ENCODE measurements at regions of chr20 and their contacts with region 1.

Region 1: GRCh38 chr20:39112178-39112743 is 150.1 kb downstream of the DHX35 start:
- DNase-seq: peak; percentile 24 to 40
- ATAC-seq: peak; percentile 64 to 90 (median 88)
- H3K4me3 ChIP-seq: no peak overlapping the region
- H3K27ac ChIP-seq: no peak overlapping the region
- H3K4me1 ChIP-seq: peaks cover 0 to 9% (median 0%) of the 10 kb centered on the region in 9 donors
- H3K27me3 ChIP-seq: peaks cover 0 to 53% (median 28%) of the 10 kb centered on the region in 7 donors
- CTCF ChIP-seq: peak; percentile 31 to 74 (median 64)

Region 2: DNA sequence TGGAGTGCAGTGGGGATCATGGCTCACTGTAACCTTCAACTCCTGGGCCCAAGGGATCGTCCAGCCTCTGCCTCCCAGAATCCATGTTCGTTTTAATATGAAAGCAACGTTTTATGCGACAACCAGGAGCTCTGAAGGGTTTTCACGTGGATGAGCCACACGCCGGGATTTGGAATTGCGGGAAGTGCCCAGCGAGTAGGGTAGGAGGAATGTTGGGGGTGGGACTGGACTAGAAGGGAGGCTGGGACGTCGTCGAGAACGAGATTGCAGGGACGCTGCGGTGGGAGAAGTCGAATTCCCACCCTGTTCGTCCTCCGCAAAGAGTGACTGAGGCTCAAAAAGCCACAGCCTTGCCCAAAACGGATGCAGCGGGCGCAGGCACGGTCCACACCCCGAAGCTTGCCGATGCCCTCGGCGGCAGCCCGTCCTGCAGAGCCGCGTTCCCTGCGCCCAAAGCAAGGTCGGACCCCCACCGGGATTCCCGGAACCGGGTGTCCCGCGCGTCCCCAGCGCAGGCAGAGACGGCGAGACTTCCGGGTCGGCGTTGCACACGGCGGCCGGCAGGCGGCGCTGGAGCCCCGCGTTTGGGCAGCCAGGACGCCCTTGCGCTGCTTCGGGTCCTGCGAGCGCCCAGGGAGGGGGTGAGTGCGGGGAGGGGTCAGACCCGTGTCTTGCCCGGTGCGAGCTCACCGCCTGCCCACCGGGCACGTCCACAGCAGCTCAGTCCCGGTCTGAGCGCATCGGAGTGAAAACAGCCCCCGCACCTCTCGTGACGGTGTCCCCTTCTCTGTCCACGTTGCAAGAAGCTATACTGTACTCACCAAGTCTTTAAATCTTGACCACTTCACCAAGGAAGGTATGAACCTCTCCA is 62.3 kb before region 1 on chr20:
- intact Hi-C with region 1: no loop called
- DNase-seq: peak; percentile 72 to 85
- ATAC-seq: peak; percentile 84 to 92 (median 88)
- H3K4me3 ChIP-seq: peak overlapping the region; percentile 19 to 80 (median 68)
- H3K27ac ChIP-seq: peak overlapping the region in 8 of 10 donors; percentile 12 to 71 (median 28)
- H3K4me1 ChIP-seq: peaks cover 0 to 16% (median 7%) of the 10 kb centered on the region in 9 donors
- H3K27me3 ChIP-seq: peaks cover 0 to 14% (median 0%) of the 10 kb centered on the region in 7 donors
- CTCF ChIP-seq: peak; percentile 95 to 100 (median 99)

Region 3: GRCh38 chr20:39264506-39265172 is 152.4 kb after region 1 on chr20:
- intact Hi-C with region 1: loop called in 2 of 10 experiments (anchors 5 to 10 kb)
- DNase-seq: peak; percentile 41 to 50
- ATAC-seq: peak; percentile 28 to 79 (median 54)
- H3K4me3 ChIP-seq: no peak overlapping the region
- H3K27ac ChIP-seq: no peak overlapping the region
- H3K4me1 ChIP-seq: peaks cover 0 to 24% (median 0%) of the 10 kb centered on the region in 9 donors
- H3K27me3 ChIP-seq: peaks cover 0 to 8% (median 0%) of the 10 kb centered on the region in 7 donors
- CTCF ChIP-seq: peak; percentile 58 to 92 (median 86)

Region 4: GRCh38 chr20:39429716-39430115 is 317.5 kb after region 1 on chr20:
- intact Hi-C with region 1: loop called in 1 of 10 experiments (anchors 5 kb)
- DNase-seq: peak in 1 of 2 donors; percentile 9
- ATAC-seq: peak in 3 of 8 donors; percentile 28 to 67 (median 37)
- H3K4me3 ChIP-seq: no peak overlapping the region
- H3K27ac ChIP-seq: no peak overlapping the region
- H3K4me1 ChIP-seq: no peaks in the 10 kb centered on the region
- H3K27me3 ChIP-seq: no peaks in the 10 kb centered on the region
- CTCF ChIP-seq: peak in 8 of 9 donors; percentile 15 to 53 (median 40)

Region 5: GRCh38 chr20:39874049-39874888 is 762.0 kb after region 1 on chr20:
- intact Hi-C with region 1: loop called in 5 of 10 experiments (anchors 5 to 10 kb)
- DNase-seq: peak; percentile 46 to 88
- ATAC-seq: peak; percentile 53 to 97 (median 95)
- H3K4me3 ChIP-seq: no peak overlapping the region
- H3K27ac ChIP-seq: no peak overlapping the region
- H3K4me1 ChIP-seq: peaks cover 0 to 8% (median 0%) of the 10 kb centered on the region in 9 donors
- H3K27me3 ChIP-seq: peaks cover 0 to 15% (median 5%) of the 10 kb centered on the region in 7 donors
- CTCF ChIP-seq: peak; percentile 62 to 89 (median 85)

Region 6: DNA sequence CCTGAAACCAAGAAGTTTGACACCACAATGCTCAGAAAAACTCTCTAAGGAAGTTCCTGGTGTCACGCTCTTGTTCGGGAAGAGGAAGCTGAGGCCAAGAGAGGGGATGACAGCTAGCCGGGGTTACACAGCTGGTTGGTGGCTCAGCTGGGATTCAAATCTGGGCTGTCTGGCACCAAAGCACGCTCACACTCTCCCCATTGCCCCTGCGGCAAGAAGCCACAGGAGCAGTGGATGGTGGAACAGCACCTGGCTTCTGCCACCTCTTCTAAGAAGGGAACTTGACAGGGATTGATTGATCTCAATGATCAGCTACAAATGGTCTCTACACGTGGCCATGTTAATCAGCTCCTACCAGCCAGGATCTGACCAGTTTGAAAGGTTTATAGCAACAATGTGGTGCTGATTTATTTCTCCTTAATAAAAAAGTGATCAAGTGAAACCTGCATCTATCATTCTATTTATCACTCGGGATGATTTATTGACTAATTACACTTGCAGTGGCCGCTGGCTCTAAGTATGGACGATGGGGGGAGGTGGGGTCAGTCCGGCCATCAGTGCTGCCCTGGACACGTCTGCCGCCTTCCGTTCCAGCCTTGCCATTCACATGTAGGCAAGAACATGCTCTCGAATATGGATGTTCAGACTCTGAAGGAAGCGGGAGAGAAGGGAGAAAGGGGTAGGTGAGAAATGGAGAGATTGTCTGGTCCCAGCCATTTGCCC is 1844.4 kb after region 1 on chr20:
- intact Hi-C with region 1: loop called in 4 of 10 experiments (anchors 5 to 10 kb)
- DNase-seq: no peak
- ATAC-seq: peak in 1 of 8 donors; percentile 37
- H3K4me3 ChIP-seq: no peak overlapping the region
- H3K27ac ChIP-seq: no peak overlapping the region
- H3K4me1 ChIP-seq: peaks cover 0 to 10% (median 0%) of the 10 kb centered on the region in 9 donors
- H3K27me3 ChIP-seq: peaks cover 0 to 10% (median 0%) of the 10 kb centered on the region in 7 donors
- CTCF ChIP-seq: no peak